ENCODE measurements at regions of chr6 and their contacts with region 1.

Region 1: DNA sequence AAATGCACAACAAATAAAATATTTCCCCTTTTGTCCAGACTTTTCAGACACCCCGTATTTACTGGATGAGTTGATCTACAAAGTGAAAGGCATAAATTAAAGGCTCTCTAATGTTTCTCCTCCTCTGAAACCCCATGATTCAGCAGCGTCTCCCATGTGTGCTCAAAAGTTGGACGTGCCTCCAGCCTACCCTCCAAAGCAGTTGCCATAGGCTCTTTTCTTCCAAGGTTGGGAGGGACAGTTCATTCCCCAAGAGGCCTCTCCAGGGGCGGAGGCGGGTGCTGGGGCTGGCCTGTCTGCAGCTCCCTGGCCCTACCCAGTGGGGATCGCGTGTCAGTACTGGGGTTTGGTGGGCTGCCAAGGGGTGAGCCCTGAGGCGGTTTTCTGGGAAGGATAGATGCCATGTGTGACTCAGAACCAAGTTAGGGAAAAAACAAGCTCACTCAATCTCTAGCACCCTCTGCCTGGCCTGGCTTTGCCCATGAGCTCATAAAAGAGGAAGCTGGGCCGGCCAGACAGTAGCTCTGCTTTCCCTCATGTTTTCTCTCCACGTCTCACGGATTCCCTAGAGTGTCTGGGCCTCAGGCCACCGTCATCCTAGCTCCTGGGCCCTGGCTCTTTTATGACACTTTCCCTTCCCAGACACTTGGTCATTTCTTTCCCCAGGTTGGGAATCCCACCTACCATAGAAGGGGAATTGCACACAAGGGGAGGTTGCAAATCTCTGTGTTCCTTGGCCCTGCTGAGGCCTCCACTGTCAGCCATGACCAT is 8.0 kb upstream of the IER3 start:
- DNase-seq: peak; percentile 77 to 98
- ATAC-seq: peak; percentile 89 to 92
- H3K4me3 ChIP-seq: no peak overlapping the region
- H3K27ac ChIP-seq: peak overlapping the region; percentile 97
- H3K4me1 ChIP-seq: peaks cover 68% of the 10 kb centered on the region
- CTCF ChIP-seq: 0 out of 3 replicates have a peak, but pooled peaks have one; percentile 6
- EP300 ChIP-seq: peak; percentile 74 to 86; a peak in 2 of 5 replicates
- POLR2A ChIP-seq: no peak
- RAD21 ChIP-seq: peak; percentile 35 to 63

Region 2: GRCh38 chr6:29953001-29953441 is 799.3 kb before region 1 on chr6:
- CTCF ChIA-PET with region 1: no interaction called
- POLR2A ChIA-PET with region 1: no interaction called
- DNase-seq: peak; percentile 46 to 66
- ATAC-seq: peak; percentile 84 to 86
- H3K4me3 ChIP-seq: no peak overlapping the region
- H3K27ac ChIP-seq: peak overlapping the region; percentile 51 to 73; a peak in 3 of 6 replicates
- H3K4me1 ChIP-seq: peaks cover 12% of the 10 kb centered on the region
- CTCF ChIP-seq: no peak
- EP300 ChIP-seq: no peak
- POLR2A ChIP-seq: no peak
- RAD21 ChIP-seq: no peak

Region 3: DNA sequence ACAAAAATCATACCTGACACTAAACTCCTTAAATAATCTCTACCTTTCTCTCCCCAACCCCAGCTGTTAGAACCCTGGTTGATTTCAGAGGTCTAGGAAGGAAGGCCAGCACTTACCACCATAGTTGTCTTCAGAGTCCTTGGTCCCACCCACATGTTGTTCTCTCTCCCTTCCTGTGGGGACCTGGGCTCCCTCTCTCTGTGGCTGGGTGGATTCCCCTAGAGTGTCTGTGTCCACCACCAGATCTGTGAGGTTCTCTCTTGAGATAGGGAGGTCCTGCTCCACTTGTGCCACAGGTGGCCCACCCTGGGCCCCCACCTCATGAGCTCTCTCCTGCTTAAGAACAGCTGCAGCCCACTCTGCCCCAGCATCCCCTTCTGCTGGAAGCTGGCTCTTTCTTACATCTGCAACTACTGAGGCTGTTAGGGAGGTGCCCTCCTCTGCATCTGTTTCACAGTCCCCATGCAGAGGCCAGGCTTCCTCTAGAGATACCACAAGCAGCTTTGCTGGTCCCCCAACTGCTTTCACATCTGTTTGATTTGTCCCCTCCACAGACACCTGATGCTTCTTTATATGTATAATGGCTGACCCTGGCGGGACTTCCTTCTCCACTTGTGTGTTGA is 40.5 kb before region 1 on chr6:
- CTCF ChIA-PET with region 1: no interaction called
- POLR2A ChIA-PET with region 1: no interaction called
- DNase-seq: no peak
- ATAC-seq: no peak
- H3K4me3 ChIP-seq: no peak overlapping the region
- H3K27ac ChIP-seq: no peak overlapping the region
- H3K4me1 ChIP-seq: peaks cover 39% of the 10 kb centered on the region
- CTCF ChIP-seq: no peak
- EP300 ChIP-seq: no peak
- POLR2A ChIP-seq: no peak
- RAD21 ChIP-seq: no peak

Region 4: GRCh38 chr6:30769088-30769852 is 16.9 kb after region 1 on chr6:
- CTCF ChIA-PET with region 1: interaction called, 14 read pairs
- POLR2A ChIA-PET with region 1: interaction called, 46 read pairs
- DNase-seq: peak; percentile 93 to 94
- ATAC-seq: peak; percentile 91 to 95
- H3K4me3 ChIP-seq: peak overlapping the region; percentile 3; the same call in 1 of the 3 replicates
- H3K27ac ChIP-seq: peak overlapping the region; percentile 89 to 97
- H3K4me1 ChIP-seq: peaks cover 70% of the 10 kb centered on the region
- CTCF ChIP-seq: no peak
- EP300 ChIP-seq: peak; percentile 68 to 81; a peak in 3 of 5 replicates
- POLR2A ChIP-seq: no peak
- RAD21 ChIP-seq: peak; percentile 13 to 34; a peak in 2 of 5 replicates

Region 5: DNA sequence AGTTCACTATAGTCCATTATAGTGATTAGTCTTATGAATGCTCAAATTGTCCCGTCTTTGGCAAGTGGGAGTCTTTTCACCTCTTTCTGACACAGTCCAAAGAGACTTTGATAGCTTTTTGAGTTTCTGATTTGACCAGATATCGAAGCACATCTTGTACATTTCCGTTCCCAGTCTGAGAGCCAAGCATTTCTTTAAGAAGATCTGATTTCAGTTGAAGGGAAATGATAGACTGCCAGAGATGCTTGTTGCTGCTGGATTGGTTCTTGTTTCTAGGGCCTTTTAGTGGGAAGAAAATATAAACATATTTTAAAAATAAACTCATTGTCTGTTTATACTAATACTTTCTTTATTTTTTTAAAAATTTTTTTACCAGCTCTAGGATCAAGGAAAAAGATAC is 46.2 kb after region 1 on chr6:
- CTCF ChIA-PET with region 1: no interaction called
- POLR2A ChIA-PET with region 1: no interaction called
- DNase-seq: no peak
- ATAC-seq: no peak
- H3K4me3 ChIP-seq: no peak overlapping the region
- H3K27ac ChIP-seq: no peak overlapping the region
- H3K4me1 ChIP-seq: no peaks in the 10 kb centered on the region
- CTCF ChIP-seq: no peak
- EP300 ChIP-seq: no peak
- POLR2A ChIP-seq: no peak
- RAD21 ChIP-seq: no peak